ENCODE measurements at regions of chr19 and their contacts with region 1.

Region 1: GRCh38 chr19:14136509-14137281 is at the start of gene ASF1B:
- DNase-seq: peak; percentile 99
- ATAC-seq: peak; percentile 88
- H3K4me3 Mint-ChIP-seq: peak within 1 kb of the TSS; percentile 88
- H3K27ac Mint-ChIP-seq: peak within 1 kb of the TSS; percentile 93
- H3K4me1 Mint-ChIP-seq: peaks cover 43% of the 10 kb centered on the region
- H3K27me3 Mint-ChIP-seq: no peaks in the 10 kb centered on the region
- total RNA-seq, gene ASF1B: 64.6 to 70.4 TPM

Region 2: GRCh38 chr19:13952154-13953035 is 184.3 kb before region 1 on chr19 and contains the start of gene DCAF15:
- CTCF ChIA-PET with region 1: interaction called, 3 read pairs
- POLR2A ChIA-PET with region 1: no interaction called
- intact Hi-C with region 1: loop called in 1 of 2 experiments (anchors 1 kb)
- DNase-seq: peak; percentile 100
- ATAC-seq: peak; percentile 99
- H3K4me3 Mint-ChIP-seq: peak within 1 kb of the TSS; percentile 88
- H3K27ac Mint-ChIP-seq: peak within 1 kb of the TSS; percentile 81
- H3K4me1 Mint-ChIP-seq: peaks cover 16% of the 10 kb centered on the region
- H3K27me3 Mint-ChIP-seq: no peaks in the 10 kb centered on the region
- total RNA-seq, gene DCAF15: 55.8 to 61.6 TPM

Region 3: GRCh38 chr19:14091081-14091812 is 45.4 kb before region 1 on chr19:
- CTCF ChIA-PET with region 1: interaction called, 6 read pairs
- POLR2A ChIA-PET with region 1: interaction called, 5 read pairs
- intact Hi-C with region 1: loop called (anchors 1 to 5 kb)
- DNase-seq: peak; percentile 76
- ATAC-seq: peak; percentile 75
- H3K4me3 Mint-ChIP-seq: peak overlapping the region; percentile 81
- H3K27ac Mint-ChIP-seq: peak overlapping the region; percentile 98
- H3K4me1 Mint-ChIP-seq: peaks cover 20% of the 10 kb centered on the region
- H3K27me3 Mint-ChIP-seq: no peaks in the 10 kb centered on the region

Region 4: DNA sequence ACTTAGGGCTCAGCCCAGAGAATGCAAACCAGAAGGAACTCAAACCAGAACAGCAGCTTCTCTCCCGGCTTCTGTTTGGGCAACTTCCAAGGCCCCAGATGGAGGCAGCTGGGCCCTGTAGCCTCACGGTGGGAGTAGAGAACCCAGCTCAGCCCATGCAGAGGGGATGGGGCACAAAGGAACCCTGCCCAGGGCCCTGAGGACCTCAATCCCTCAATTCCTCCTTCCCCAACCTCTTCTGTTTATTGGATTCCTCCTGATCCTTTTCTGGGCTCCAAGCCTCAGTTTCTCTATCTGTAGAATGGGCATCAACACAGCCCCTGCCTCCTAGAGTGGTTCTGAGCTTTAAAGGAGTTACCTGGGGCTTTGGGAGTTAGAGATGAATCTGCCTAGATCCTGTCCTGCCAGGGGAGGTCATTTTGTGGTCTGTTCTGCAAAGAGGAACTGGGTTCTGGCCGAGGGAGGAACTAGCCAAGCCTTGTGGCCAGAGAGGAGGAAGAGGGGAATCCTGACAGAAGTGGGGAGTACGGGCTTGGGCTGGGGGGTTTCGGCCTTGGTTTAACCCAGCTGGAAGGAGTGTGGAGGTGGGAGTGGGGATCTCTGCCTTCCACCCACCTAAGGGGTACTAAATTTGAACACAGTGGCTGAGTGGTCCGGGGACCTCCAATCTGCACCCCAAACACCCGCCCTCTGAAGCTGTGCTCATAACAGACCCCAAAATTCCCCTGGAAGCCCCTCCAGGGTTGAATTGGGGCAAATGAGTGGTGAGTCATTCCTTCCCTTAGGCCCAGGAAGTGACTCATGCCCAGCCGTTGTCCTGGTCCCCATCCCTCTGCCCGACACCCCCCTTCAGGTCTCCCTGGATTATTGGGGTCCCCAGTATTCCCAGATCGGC is 247.2 kb after region 1 on chr19:
- CTCF ChIA-PET with region 1: interaction called, 5 read pairs
- POLR2A ChIA-PET with region 1: no interaction called
- intact Hi-C with region 1: loop called in 1 of 2 experiments (anchors 1 kb)
- DNase-seq: peak; percentile 72
- ATAC-seq: peak; percentile 10
- H3K4me3 Mint-ChIP-seq: peak overlapping the region; percentile 92
- H3K27ac Mint-ChIP-seq: peak overlapping the region; percentile 99
- H3K4me1 Mint-ChIP-seq: peaks cover 40% of the 10 kb centered on the region
- H3K27me3 Mint-ChIP-seq: no peaks in the 10 kb centered on the region

Region 5: DNA sequence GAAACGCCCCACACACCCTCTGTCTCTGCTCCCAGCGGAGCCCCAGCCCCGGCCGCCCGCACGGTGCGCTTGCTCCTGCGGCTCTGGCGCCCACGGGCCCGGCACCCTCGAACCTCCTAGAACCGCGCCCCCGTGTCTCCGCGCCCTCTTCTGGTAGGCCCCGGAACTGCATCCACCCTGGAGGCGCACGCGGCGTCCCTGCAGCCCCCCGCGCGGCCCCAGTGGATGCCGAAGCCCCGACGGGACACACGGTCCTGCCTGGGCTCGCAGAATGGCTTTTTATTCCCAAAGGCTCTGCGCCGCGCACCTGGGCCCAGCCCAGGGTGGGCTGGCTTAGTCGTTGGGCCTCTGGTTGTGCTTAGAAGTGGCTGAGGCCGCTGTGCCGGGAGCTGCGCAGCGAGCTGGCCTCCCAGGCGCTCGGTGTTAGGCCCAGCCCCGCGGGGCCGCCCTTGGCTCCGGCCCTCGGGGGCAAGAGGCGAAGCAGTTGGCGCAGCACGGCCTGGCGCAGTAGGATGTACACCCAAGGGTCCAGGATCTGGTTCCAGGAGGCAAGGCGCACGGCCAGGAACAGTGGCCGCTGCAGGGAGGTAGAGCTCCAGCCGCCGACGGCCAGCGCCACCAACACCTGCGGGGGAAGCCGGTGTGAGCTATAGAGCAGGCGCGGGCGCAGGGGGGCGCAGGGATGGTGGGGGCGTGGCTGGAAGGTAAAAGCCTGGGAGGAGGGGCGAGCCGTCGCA is 335.7 kb after region 1 on chr19:
- CTCF ChIA-PET with region 1: interaction called, 6 read pairs
- POLR2A ChIA-PET with region 1: interaction called, 5 read pairs
- intact Hi-C with region 1: loop called (anchors 2 to 5 kb)
- DNase-seq: peak; percentile 93
- ATAC-seq: peak; percentile 56
- H3K4me3 Mint-ChIP-seq: no peak overlapping the region
- H3K27ac Mint-ChIP-seq: no peak overlapping the region
- H3K4me1 Mint-ChIP-seq: peaks cover 32% of the 10 kb centered on the region
- H3K27me3 Mint-ChIP-seq: peaks cover 16% of the 10 kb centered on the region

Measured in activated CD4-positive, alpha-beta T cell treated with anti-CD3 and anti-CD28 coated beads for 36 hours (primary cell).